ENCODE measurements at regions of chr1 and their contacts with region 1.

Region 1: GRCh38 chr1:202498542-202498941 is 150.0 kb downstream of the PPP1R12B start:
- DNase-seq: no peak
- H3K4me3 ChIP-seq: no peak overlapping the region
- H3K27ac ChIP-seq: no peak overlapping the region
- H3K4me1 ChIP-seq: no peaks in the 10 kb centered on the region
- H3K27me3 ChIP-seq: no peaks in the 10 kb centered on the region
- CTCF ChIP-seq: no peak
- EP300 ChIP-seq: no peak
- POLR2A ChIP-seq: no peak

Region 2: GRCh38 chr1:202599677-202600431 is 101.3 kb after region 1 on chr1:
- in situ Hi-C with region 1: loop called in 3 of 4 experiments (anchors 10 to 25 kb)
- intact Hi-C with region 1: loop called (anchors 10 kb)
- DNase-seq: peak; percentile 53
- H3K4me3 ChIP-seq: no peak overlapping the region
- H3K27ac ChIP-seq: peak overlapping the region; percentile 1 to 50 (median 33)
- H3K4me1 ChIP-seq: peaks cover 0 to 6% (median 0%) of the 10 kb centered on the region in 4 donors
- H3K27me3 ChIP-seq: no peaks in the 10 kb centered on the region
- CTCF ChIP-seq: peak; percentile 54 to 69 (median 58)
- EP300 ChIP-seq: no peak
- POLR2A ChIP-seq: no peak